ENCODE measurements at regions of chr20 and their contacts with region 1.

Region 1: GRCh38 chr20:56468316-56469082 is at the start of gene RTF2:
- DNase-seq: peak; percentile 99
- ATAC-seq: peak; percentile 93
- H3K4me3 Mint-ChIP-seq: peak within 1 kb of the TSS; percentile 100
- H3K27ac Mint-ChIP-seq: peak within 1 kb of the TSS; percentile 99
- H3K4me1 Mint-ChIP-seq: peaks cover 44% of the 10 kb centered on the region
- H3K27me3 Mint-ChIP-seq: no peaks in the 10 kb centered on the region
- CTCF ChIP-seq: no peak
- total RNA-seq, gene RTF2: 81.0 and 81.1 TPM in 2 replicates

Region 2: DNA sequence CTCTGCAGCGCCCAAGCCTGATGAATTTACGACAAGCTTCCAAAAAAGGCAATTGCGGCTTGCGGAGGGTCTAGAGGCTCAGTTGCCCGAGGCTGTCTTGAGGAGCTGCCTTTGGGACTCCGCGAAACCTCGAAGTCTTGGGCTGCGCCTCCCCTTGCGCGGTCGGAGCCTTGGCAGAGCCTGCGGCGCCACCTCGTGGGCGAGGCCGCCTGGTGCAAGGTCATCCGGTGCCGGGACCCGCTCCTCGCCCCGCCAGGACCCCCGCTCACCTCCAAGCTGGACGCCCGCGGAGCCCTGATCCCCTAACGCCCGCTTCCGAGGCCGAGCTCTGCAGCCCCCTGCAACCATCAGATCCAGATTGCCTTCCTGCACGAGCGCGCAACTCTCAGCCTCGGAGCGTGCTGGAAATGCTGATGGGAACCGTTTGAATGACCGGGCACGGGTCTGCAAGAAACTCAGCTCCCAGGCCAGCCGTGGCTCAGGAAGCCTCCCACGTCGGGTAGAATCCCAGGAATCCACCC is 124.6 kb before region 1 on chr20:
- CTCF ChIA-PET with region 1: no interaction called
- POLR2A ChIA-PET with region 1: no interaction called
- intact Hi-C with region 1: no loop called
- DNase-seq: no peak
- ATAC-seq: no peak
- H3K4me3 Mint-ChIP-seq: no peak overlapping the region
- H3K27ac Mint-ChIP-seq: no peak overlapping the region
- H3K4me1 Mint-ChIP-seq: no peaks in the 10 kb centered on the region
- H3K27me3 Mint-ChIP-seq: peaks cover 64% of the 10 kb centered on the region
- CTCF ChIP-seq: no peak

Region 3: GRCh38 chr20:56392282-56393137 is 76.0 kb before region 1 on chr20 and contains the start of gene CSTF1:
- CTCF ChIA-PET with region 1: interaction called, 3 read pairs
- POLR2A ChIA-PET with region 1: interaction called, 13 read pairs
- intact Hi-C with region 1: loop called (anchors 1 kb)
- DNase-seq: peak; percentile 96
- ATAC-seq: peak; percentile 93
- H3K4me3 Mint-ChIP-seq: no peak within 1 kb of the TSS
- H3K27ac Mint-ChIP-seq: no peak within 1 kb of the TSS
- H3K4me1 Mint-ChIP-seq: peaks cover 22% of the 10 kb centered on the region
- H3K27me3 Mint-ChIP-seq: no peaks in the 10 kb centered on the region
- CTCF ChIP-seq: no peak
- total RNA-seq, gene CSTF1: 31.4 and 36.2 TPM in 2 replicates

Region 4: GRCh38 chr20:56429502-56429901 is 39.0 kb before region 1 on chr20:
- CTCF ChIA-PET with region 1: no interaction called
- POLR2A ChIA-PET with region 1: interaction called, 6 read pairs
- intact Hi-C with region 1: loop called (anchors 1 kb)
- DNase-seq: no peak
- ATAC-seq: peak; percentile 25
- H3K4me3 Mint-ChIP-seq: peak overlapping the region; percentile 70
- H3K27ac Mint-ChIP-seq: peak overlapping the region; percentile 62
- H3K4me1 Mint-ChIP-seq: peaks cover 26% of the 10 kb centered on the region
- H3K27me3 Mint-ChIP-seq: peaks cover 4% of the 10 kb centered on the region
- CTCF ChIP-seq: no peak

Region 5: DNA sequence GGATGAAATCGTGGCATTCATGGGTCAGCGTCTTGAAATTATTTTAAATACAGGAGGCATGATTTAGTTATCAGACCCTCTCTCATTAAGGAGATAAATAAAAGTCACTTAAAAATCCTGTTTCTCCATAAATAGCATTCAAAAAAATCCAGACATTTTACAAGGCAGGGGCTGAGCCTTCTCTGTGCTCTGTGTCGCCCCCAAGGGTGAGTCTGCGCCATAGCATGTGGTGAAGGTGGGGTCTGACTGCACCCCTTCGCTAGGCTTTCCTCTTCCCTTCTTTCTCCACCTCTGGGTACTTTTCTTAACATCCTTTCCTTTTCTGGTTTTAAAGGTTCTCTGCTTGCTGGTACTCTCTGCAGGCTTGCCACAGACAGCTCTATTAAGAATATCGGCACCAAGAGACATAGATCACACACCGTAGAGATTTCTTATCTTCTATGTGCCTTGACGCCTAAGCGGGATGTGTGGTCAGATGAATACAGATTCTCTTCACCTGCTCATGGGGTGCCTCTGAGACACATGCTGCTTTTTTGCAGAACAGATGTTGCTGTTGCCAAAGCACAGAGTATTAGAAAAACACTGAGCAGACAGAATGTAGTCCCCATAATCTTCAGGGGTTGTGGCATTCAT is 36.0 kb after region 1 on chr20:
- CTCF ChIA-PET with region 1: no interaction called
- POLR2A ChIA-PET with region 1: no interaction called
- intact Hi-C with region 1: no loop called
- DNase-seq: no peak
- ATAC-seq: no peak
- H3K4me3 Mint-ChIP-seq: no peak overlapping the region
- H3K27ac Mint-ChIP-seq: no peak overlapping the region
- H3K4me1 Mint-ChIP-seq: no peaks in the 10 kb centered on the region
- H3K27me3 Mint-ChIP-seq: no peaks in the 10 kb centered on the region
- CTCF ChIP-seq: no peak

Region 6: GRCh38 chr20:56566271-56566981 is 97.9 kb after region 1 on chr20:
- CTCF ChIA-PET with region 1: no interaction called
- POLR2A ChIA-PET with region 1: no interaction called
- intact Hi-C with region 1: no loop called
- DNase-seq: no peak
- ATAC-seq: no peak
- H3K4me3 Mint-ChIP-seq: no peak overlapping the region
- H3K27ac Mint-ChIP-seq: no peak overlapping the region
- H3K4me1 Mint-ChIP-seq: no peaks in the 10 kb centered on the region
- H3K27me3 Mint-ChIP-seq: peaks cover 11% of the 10 kb centered on the region
- CTCF ChIP-seq: no peak

Region 7: GRCh38 chr20:58388882-58389323 is 1920.4 kb after region 1 on chr20 and contains the start of gene VAPB:
- CTCF ChIA-PET with region 1: no interaction called
- POLR2A ChIA-PET with region 1: interaction called, 4 read pairs
- intact Hi-C with region 1: loop called (anchors 1 kb)
- DNase-seq: peak; percentile 99
- ATAC-seq: peak; percentile 97
- H3K4me3 Mint-ChIP-seq: peak within 1 kb of the TSS; percentile 91
- H3K27ac Mint-ChIP-seq: peak within 1 kb of the TSS; percentile 85
- H3K4me1 Mint-ChIP-seq: peaks cover 37% of the 10 kb centered on the region
- H3K27me3 Mint-ChIP-seq: peaks cover 4% of the 10 kb centered on the region
- CTCF ChIP-seq: no peak
- total RNA-seq, gene VAPB: 20.6 and 26.2 TPM in 2 replicates